ENCODE measurements at regions of chr7 and their contacts with region 1.

Region 1: DNA sequence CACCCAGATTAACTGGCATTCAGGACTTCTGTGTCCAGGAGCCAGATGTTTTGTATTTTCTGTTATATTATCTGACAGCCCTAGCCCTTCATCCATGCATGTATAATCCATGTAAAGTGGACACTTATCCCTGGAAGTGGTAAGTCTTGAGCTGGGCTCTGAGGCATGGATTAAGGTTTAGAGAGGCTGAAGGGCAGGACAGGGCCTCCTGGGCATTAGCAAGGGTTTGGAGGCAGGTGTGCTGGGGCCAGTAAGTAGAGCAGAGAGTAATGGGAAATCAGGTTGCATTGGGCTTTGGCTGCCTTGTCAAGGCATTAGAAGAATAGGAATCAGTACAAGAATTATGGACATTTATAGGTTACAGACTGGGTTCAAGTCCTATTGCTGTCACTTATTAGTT is 138.0 kb downstream of the DYNC1I1 start:
- DNase-seq: no peak

Region 2: GRCh38 chr7:95963446-95963990 is 53.2 kb after region 1 on chr7:
- intact Hi-C with region 1: loop called in 1 of 2 experiments (anchors 5 kb)
- DNase-seq: no peak

Measured in posterior vena cava (tissue), 2 donors.